ENCODE measurements at regions of chr3 and their contacts with region 1.

Region 1: DNA sequence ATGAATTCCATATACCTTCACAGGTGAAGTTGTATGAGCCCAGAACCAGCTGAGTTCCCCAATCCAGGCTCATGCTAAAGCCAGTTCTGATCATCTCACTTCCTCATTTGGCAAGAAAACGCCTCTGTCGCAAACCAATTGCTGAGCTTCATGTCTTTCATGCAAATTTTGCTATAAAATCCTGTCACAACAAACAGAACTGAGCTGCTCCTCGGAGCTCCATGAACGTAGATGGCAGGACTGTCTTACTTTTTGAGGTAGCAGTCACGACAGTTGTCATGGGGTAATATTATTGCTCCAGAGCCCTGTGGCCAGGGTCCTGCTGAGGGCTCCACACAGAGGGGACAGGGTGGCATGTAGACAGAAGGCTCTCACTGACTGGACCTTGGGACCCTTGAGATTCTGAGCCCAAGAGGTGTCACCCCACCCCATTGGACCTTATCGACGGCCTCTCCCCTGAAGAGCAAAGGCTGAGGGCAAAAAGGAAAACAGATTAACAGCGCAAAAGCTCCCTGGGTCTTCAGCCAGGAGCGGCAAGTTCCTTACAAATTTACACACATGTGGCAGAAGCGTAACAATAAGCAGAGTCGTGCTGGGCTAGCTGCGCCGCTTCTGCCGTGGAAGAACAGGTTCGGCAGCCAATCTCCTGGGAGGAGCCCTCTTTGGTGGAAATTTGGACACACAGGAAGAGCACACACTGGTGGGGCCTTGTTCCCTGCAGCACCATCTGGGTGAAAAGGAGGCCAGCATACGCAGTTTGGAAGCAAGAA is 249.2 kb downstream of the OPA1 start:
- DNase-seq: no peak
- ATAC-seq: no peak
- H3K4me3 ChIP-seq: no peak overlapping the region
- H3K27ac ChIP-seq: no peak overlapping the region
- H3K4me1 ChIP-seq: peaks cover 38% of the 10 kb centered on the region
- H3K27me3 ChIP-seq: no peaks in the 10 kb centered on the region
- CTCF ChIP-seq: no peak

Region 2: GRCh38 chr3:193788189-193788991 is 53.8 kb before region 1 on chr3:
- CTCF ChIA-PET with region 1: no interaction called
- POLR2A ChIA-PET with region 1: no interaction called
- intact Hi-C with region 1: loop called (anchors 5 kb)
- DNase-seq: peak; percentile 75
- ATAC-seq: peak; percentile 82
- H3K4me3 ChIP-seq: no peak overlapping the region
- H3K27ac ChIP-seq: no peak overlapping the region
- H3K4me1 ChIP-seq: peaks cover 28% of the 10 kb centered on the region
- H3K27me3 ChIP-seq: no peaks in the 10 kb centered on the region
- CTCF ChIP-seq: peak; percentile 90

Region 3: GRCh38 chr3:193824365-193824764 is 17.8 kb before region 1 on chr3:
- CTCF ChIA-PET with region 1: no interaction called
- POLR2A ChIA-PET with region 1: no interaction called
- intact Hi-C with region 1: loop called (anchors 1 kb)
- DNase-seq: peak; percentile 49
- ATAC-seq: peak; percentile 65
- H3K4me3 ChIP-seq: no peak overlapping the region
- H3K27ac ChIP-seq: no peak overlapping the region
- H3K4me1 ChIP-seq: peaks cover 29% of the 10 kb centered on the region
- H3K27me3 ChIP-seq: no peaks in the 10 kb centered on the region
- CTCF ChIP-seq: no peak

Region 4: GRCh38 chr3:193946945-193947344 is 104.7 kb after region 1 on chr3:
- CTCF ChIA-PET with region 1: no interaction called
- POLR2A ChIA-PET with region 1: interaction called, 12 read pairs
- intact Hi-C with region 1: no loop called
- DNase-seq: peak; percentile 82
- ATAC-seq: peak; percentile 86
- H3K4me3 ChIP-seq: no peak overlapping the region
- H3K27ac ChIP-seq: peak overlapping the region; percentile 35
- H3K4me1 ChIP-seq: peaks cover 17% of the 10 kb centered on the region
- H3K27me3 ChIP-seq: no peaks in the 10 kb centered on the region
- CTCF ChIP-seq: no peak

Region 5: GRCh38 chr3:193971261-193971751 is 129.1 kb after region 1 on chr3:
- CTCF ChIA-PET with region 1: no interaction called
- POLR2A ChIA-PET with region 1: interaction called, 3 read pairs
- intact Hi-C with region 1: loop called (anchors 1 kb)
- DNase-seq: peak; percentile 81
- ATAC-seq: peak; percentile 86
- H3K4me3 ChIP-seq: peak overlapping the region; percentile 66
- H3K27ac ChIP-seq: peak overlapping the region; percentile 91
- H3K4me1 ChIP-seq: peaks cover 35% of the 10 kb centered on the region
- H3K27me3 ChIP-seq: no peaks in the 10 kb centered on the region
- CTCF ChIP-seq: no peak